HEK293 (cell line): ENCODE measurements at regions of chr2 and their contacts with region 1.

Region 1: DNA sequence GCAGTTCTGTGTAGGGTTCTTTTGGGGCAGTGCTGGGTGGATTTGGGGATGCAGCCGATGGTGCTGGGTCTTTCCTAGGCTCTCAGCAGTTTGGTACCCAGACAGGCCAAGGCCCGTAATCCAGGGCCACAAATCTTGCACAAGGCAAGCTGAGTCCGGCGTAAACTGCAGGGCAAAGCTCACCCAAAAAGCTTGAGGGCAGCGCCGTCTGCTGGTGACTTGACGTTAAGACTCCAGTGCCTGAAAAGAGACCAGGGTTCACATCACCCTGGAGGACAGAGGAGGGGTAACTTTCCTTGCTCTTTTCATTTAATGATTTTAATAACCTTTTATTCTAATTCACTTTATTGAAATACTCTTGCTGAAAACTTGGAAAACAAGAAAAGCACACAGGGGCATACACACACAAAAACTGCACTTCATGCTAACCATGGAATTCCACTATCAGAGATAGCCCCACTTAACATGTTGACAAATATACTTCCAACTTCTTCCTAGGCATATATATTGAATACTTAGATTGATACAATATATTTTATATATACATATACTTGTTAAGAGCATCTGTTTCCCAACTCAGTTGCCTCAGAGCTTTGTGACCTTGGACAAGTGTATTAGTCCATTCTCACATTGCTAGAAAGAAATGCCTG is 38.9 kb downstream of the CNGA3 start:
- H3K4me3 ChIP-seq: no peak overlapping the region
- H3K27ac ChIP-seq: no peak overlapping the region
- H3K4me1 ChIP-seq: no peaks in the 10 kb centered on the region
- CTCF ChIP-seq: peak; percentile 86

Region 2: DNA sequence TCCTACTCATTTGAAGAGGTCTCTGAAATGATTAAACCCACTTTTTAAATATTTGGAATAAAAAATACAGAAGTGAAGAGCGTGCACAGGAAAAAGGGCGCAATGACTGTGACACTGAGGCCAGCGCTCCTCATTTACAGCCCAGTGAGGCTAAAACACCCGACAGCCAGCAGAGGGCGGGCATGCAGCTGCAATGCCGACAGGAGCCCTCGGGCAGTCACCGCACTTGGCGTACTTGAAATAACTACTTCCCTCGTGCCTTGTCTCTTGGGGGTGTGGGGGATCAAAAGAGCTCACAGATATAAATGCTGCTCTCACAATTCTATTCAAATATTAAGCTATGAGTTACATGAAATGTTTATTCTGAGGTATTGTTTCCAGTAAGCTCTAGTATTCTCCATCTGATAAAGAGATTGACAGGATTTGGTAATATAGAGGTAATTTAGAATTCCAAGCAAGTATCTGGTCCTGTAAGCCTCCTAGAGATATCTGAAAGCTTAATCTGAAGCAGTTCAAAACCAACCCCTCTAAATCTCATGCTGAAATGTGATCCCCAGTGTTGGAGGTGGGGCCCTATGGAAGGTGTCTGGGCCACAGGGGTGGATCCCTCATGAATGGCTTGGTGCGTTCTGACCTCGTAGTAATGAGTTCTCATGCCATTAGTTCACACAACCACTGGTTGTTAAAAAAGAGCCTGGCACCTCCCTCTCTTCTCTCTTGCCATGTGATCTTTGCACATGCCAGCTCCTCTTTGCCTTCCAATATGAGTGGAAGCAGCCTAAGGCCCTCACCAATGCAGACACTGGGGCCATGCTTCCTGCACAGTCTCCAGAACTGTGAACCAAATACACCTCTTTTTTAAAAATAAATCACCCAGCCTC is 578.2 kb before region 1 on chr2:
- CTCF ChIA-PET with region 1: interaction called, 36 read pairs
- POLR2A ChIA-PET with region 1: no interaction called
- H3K4me3 ChIP-seq: no peak overlapping the region
- H3K27ac ChIP-seq: no peak overlapping the region
- H3K4me1 ChIP-seq: no peaks in the 10 kb centered on the region
- CTCF ChIP-seq: peak; percentile 72

Region 3: DNA sequence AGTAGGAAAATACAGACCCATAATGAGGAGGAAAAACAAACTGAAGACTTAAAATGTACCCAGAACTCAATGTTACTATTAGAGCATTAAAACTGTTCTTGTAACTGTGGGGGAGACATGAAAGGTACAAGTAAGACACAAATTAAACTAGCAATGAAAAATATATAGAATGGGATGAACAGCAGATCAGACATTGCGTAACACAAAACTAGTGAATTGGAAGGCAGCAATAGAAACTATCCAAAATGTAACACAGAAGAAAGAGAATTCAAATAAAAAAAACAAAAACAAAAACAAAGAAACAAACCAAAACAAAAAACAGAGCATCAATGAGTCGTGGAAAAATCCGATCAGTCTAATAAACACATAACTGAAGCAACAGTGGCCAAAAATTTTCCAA is 166.0 kb before region 1 on chr2:
- CTCF ChIA-PET with region 1: no interaction called
- POLR2A ChIA-PET with region 1: no interaction called
- H3K4me3 ChIP-seq: no peak overlapping the region
- H3K27ac ChIP-seq: no peak overlapping the region
- H3K4me1 ChIP-seq: no peaks in the 10 kb centered on the region
- CTCF ChIP-seq: no peak

Region 4: DNA sequence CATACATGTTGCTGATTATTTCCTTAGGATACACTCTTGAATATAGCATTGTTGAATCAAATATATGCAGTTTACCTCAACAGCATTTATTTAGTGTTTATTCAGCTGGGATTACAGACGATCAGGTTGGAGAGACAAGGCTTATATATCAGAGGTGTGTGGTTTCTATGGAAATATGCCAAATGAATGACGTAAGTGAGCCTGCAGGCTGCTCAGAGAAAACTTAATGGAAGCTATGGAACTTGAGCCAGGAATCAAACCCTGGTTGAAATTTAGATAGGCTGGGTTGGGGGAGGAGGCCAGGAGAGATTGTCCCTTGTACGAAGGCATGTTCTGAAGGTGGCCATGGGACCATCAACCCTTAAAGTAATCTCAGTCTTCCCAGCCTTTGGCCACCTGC is 139.0 kb after region 1 on chr2:
- CTCF ChIA-PET with region 1: no interaction called
- POLR2A ChIA-PET with region 1: no interaction called
- H3K4me3 ChIP-seq: no peak overlapping the region
- H3K27ac ChIP-seq: no peak overlapping the region
- H3K4me1 ChIP-seq: peaks cover 7% of the 10 kb centered on the region
- CTCF ChIP-seq: no peak